Activated CD4-positive, alpha-beta T cell treated with anti-CD3 and anti-CD28 coated beads for 36 hours (primary cell): ENCODE measurements at regions of chr7 and their contacts with region 1.

Region 1: GRCh38 chr7:143979205-143979758 is 20.8 kb upstream of the OR6B1 start:
- DNase-seq: no peak
- ATAC-seq: no peak
- H3K4me3 Mint-ChIP-seq: no peak overlapping the region
- H3K27ac Mint-ChIP-seq: no peak overlapping the region
- H3K4me1 Mint-ChIP-seq: no peaks in the 10 kb centered on the region
- H3K27me3 Mint-ChIP-seq: peaks cover 11% of the 10 kb centered on the region

Region 2: GRCh38 chr7:143321734-143322133 is 657.5 kb before region 1 on chr7:
- CTCF ChIA-PET with region 1: no interaction called
- POLR2A ChIA-PET with region 1: no interaction called
- intact Hi-C with region 1: no loop called
- DNase-seq: no peak
- ATAC-seq: peak; percentile 42
- H3K4me3 Mint-ChIP-seq: no peak overlapping the region
- H3K27ac Mint-ChIP-seq: no peak overlapping the region
- H3K4me1 Mint-ChIP-seq: peaks cover 5% of the 10 kb centered on the region
- H3K27me3 Mint-ChIP-seq: no peaks in the 10 kb centered on the region

Region 3: GRCh38 chr7:143914938-143915652 is 64.2 kb before region 1 on chr7:
- CTCF ChIA-PET with region 1: no interaction called
- POLR2A ChIA-PET with region 1: no interaction called
- intact Hi-C with region 1: loop called in 1 of 2 experiments (anchors 5 kb)
- DNase-seq: no peak
- ATAC-seq: no peak
- H3K4me3 Mint-ChIP-seq: no peak overlapping the region
- H3K27ac Mint-ChIP-seq: no peak overlapping the region
- H3K4me1 Mint-ChIP-seq: peaks cover 4% of the 10 kb centered on the region
- H3K27me3 Mint-ChIP-seq: peaks cover 13% of the 10 kb centered on the region

Region 4: DNA sequence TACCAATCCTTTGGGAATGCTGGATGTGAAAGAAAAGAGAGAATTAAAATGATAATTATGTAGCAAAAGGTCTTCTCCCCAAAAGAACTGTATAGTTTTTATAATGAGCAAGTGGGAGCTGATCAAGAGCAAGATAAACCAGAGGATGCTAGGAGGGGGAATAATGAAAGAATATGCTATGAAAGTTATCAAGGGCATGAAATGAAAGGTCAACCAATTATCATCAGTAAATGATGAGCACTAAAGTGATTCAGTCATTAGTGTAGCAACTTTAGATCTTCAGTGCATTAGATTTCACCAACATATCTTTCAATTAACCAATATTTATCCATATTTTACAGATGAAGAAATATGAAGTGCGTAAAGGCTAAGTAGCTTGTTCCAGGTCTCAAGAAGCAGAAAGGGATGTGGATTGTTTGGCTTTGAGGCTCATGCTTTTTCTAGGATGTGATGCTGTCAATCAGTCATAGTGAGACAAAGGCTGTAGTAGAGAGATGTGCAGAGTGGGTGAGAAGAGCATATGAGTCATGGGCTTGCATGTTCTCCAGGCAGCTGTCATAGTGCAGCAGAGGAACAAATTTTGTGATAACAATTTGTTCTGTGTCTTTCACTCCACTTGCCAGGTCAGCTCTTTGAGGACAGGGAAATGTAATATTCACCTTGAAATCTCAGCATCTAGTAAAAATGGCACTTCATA is 49.9 kb before region 1 on chr7:
- CTCF ChIA-PET with region 1: no interaction called
- POLR2A ChIA-PET with region 1: no interaction called
- intact Hi-C with region 1: loop called in 1 of 2 experiments (anchors 5 kb)
- DNase-seq: peak; percentile 38
- ATAC-seq: peak; percentile 100
- H3K4me3 Mint-ChIP-seq: no peak overlapping the region
- H3K27ac Mint-ChIP-seq: no peak overlapping the region
- H3K4me1 Mint-ChIP-seq: peaks cover 12% of the 10 kb centered on the region
- H3K27me3 Mint-ChIP-seq: peaks cover 11% of the 10 kb centered on the region